ENCODE measurements at regions of chr6 and their contacts with region 1.

Region 1: GRCh38 chr6:154247119-154247861 is 109.3 kb downstream of the IPCEF1 start:
- DNase-seq: peak in 5 of 10 donors; percentile 15 to 63 (median 54)
- ATAC-seq: peak; percentile 48 to 50
- H3K4me3 Mint-ChIP-seq: peak overlapping the region; percentile 91 to 99 (median 96)
- H3K27ac Mint-ChIP-seq: peak overlapping the region; percentile 92 to 99 (median 96)
- H3K4me1 Mint-ChIP-seq: peaks cover 41 to 87% (median 77%) of the 10 kb centered on the region in 4 donors
- H3K27me3 Mint-ChIP-seq: no peaks in the 10 kb centered on the region

Region 2: GRCh38 chr6:153218184-153218792 is 1029.0 kb before region 1 on chr6:
- POLR2A ChIA-PET with region 1: no interaction called
- DNase-seq: no peak
- ATAC-seq: no peak
- H3K4me3 Mint-ChIP-seq: no peak overlapping the region
- H3K27ac Mint-ChIP-seq: peak overlapping the region in 1 of 10 donors; percentile 34
- H3K4me1 Mint-ChIP-seq: no peaks in the 10 kb centered on the region
- H3K27me3 Mint-ChIP-seq: peaks cover 0 to 10% (median 3%) of the 10 kb centered on the region in 5 donors

Region 3: DNA sequence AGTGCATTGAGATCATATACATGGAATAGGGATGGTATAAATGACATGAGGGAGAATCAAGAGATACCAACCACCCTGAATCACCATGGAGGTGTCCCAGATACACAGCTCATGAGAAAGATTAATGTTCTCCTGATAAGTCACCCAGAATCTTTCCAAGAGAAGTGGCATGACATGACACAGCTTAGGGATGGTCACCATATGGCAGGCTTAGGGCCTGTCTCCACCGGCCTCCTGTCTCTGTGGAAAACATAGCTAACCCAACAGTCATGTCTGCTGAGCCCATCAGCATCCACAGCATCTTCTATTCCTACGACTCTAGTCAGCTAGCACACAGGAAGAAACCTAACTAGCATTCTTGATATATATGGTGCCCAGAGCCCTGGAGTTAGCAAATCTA is 24.0 kb before region 1 on chr6:
- POLR2A ChIA-PET with region 1: interaction called, 18 read pairs
- DNase-seq: no peak
- ATAC-seq: no peak
- H3K4me3 Mint-ChIP-seq: peak overlapping the region in 4 of 10 donors; percentile 14 to 48 (median 24)
- H3K27ac Mint-ChIP-seq: peak overlapping the region; percentile 7 to 86 (median 66)
- H3K4me1 Mint-ChIP-seq: peaks cover 42 to 85% (median 80%) of the 10 kb centered on the region in 4 donors
- H3K27me3 Mint-ChIP-seq: no peaks in the 10 kb centered on the region

Region 4: DNA sequence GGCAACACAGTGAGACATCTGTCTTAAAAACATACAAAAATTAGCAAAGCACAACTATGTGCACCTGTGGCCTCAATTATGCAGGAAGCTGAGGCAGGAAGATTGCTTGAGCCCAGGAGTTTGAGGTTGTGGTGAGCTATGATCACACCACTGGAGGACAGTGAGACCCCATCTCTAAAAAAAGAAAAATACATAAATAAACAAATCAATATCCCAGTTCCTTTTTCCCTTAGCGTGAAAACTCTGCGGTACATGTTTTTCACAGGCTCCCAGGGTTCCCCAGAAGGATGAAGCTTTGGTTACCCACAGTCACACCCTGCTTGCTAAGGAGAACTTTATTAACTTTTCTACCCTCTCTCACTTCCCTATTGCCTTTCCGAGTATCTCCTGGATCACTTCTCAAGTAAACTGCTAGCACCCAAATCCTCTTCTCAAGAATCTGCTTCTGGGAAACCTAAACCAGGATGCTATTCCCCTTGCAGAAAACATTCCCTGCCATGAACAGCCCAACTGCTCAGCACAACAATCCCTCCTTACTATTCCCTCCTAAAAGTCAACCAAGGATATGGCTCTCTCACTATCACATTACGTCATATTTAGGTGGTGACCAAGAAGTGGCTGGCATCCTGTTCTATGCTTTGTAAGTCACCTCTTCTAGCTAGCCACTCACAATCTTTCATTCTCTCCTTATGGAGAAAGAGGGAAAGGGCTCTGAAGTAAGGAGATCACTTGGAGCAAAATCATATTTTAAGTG is 13.1 kb before region 1 on chr6:
- POLR2A ChIA-PET with region 1: interaction called, 28 read pairs
- DNase-seq: no peak
- ATAC-seq: no peak
- H3K4me3 Mint-ChIP-seq: peak overlapping the region; percentile 27 to 71 (median 62)
- H3K27ac Mint-ChIP-seq: peak overlapping the region; percentile 72 to 93 (median 86)
- H3K4me1 Mint-ChIP-seq: peaks cover 38 to 87% (median 82%) of the 10 kb centered on the region in 4 donors
- H3K27me3 Mint-ChIP-seq: no peaks in the 10 kb centered on the region

Region 5: GRCh38 chr6:154274168-154274567 is 26.9 kb after region 1 on chr6:
- POLR2A ChIA-PET with region 1: interaction called, 17 read pairs
- DNase-seq: no peak
- ATAC-seq: no peak
- H3K4me3 Mint-ChIP-seq: no peak overlapping the region
- H3K27ac Mint-ChIP-seq: peak overlapping the region in 3 of 10 donors; percentile 51 to 84 (median 64)
- H3K4me1 Mint-ChIP-seq: peaks cover 20 to 43% (median 40%) of the 10 kb centered on the region in 4 donors
- H3K27me3 Mint-ChIP-seq: no peaks in the 10 kb centered on the region

Region 6: GRCh38 chr6:154414021-154414813 is 166.9 kb after region 1 on chr6:
- POLR2A ChIA-PET with region 1: no interaction called
- DNase-seq: no peak
- ATAC-seq: no peak
- H3K4me3 Mint-ChIP-seq: no peak overlapping the region
- H3K27ac Mint-ChIP-seq: no peak overlapping the region
- H3K4me1 Mint-ChIP-seq: no peaks in the 10 kb centered on the region
- H3K27me3 Mint-ChIP-seq: peaks cover 0 to 8% (median 3%) of the 10 kb centered on the region in 5 donors